Left lung (tissue), 14 donors: ENCODE measurements at regions of chr17 and their contacts with region 1.

Region 1: GRCh38 chr17:42720996-42721583 is 23.8 kb downstream of the EZH1 start:
- DNase-seq: peak in 2 of 4 donors; percentile 52 to 80
- ATAC-seq: peak; percentile 93
- H3K4me3 ChIP-seq: no peak overlapping the region
- H3K27ac ChIP-seq: no peak overlapping the region
- H3K4me1 ChIP-seq: peaks cover 0 to 8% of the 10 kb centered on the region in 2 donors
- H3K27me3 ChIP-seq: no peaks in the 10 kb centered on the region
- CTCF ChIP-seq: peak; percentile 58 to 60

Region 2: DNA sequence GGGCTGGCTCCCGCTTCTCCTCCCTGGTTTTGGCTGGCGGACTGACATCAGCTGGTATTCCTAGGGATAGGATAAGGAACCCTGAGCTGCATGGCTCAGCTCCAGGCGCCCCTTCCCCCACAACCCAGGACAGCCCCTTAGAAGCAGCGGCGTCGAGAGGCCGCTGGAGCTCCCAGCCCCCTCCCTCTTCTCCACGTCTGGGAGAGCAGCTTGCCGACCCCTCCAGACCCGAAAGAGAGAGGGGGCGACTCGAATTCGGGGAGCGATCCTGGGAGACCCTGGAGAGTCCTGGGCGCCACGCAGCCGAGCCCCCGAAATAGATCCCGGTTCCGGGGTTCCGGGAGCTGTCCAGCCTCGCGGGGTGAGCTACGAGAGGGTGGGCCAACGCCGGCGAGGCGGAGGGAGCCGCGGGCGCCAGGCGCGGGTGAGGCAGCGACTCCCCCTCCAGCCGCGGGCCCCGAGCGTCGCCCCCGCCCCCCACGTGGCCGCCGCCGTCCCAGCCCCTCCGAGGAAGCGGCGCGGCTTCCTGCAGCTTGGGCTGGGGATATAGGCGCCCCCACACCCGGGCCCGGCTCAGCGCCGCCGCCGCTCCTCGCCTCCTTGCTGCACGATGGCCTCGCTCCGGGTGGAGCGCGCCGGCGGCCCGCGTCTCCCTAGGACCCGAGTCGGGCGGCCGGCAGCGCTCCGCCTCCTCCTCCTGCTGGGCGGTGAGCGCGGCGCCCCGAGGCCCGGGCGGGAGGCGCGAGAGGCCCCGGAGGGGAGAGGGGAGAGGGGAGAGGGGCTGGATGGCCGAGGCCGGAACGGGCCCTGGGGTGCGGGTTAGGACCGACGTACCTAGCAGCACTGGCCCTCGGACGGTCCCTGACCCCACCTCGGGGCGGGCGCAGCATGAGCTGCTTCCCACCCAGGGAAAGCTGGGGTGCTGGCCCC is 39.8 kb after region 1 on chr17 and contains the start of gene RAMP2:
- intact Hi-C with region 1: loop called in 1 of 2 experiments (anchors 5 kb)
- DNase-seq: peak in 3 of 4 donors; percentile 56 to 83 (median 63)
- ATAC-seq: peak; percentile 58
- H3K4me3 ChIP-seq: peak within 1 kb of the TSS; percentile 40 to 49
- H3K27ac ChIP-seq: peak within 1 kb of the TSS; percentile 78 to 80
- H3K4me1 ChIP-seq: peaks cover 4 to 16% of the 10 kb centered on the region in 2 donors
- H3K27me3 ChIP-seq: peaks cover 20 to 57% of the 10 kb centered on the region in 2 donors
- CTCF ChIP-seq: no peak
- polyA plus RNA-seq, gene RAMP2: 153 to 213 (median 182) TPM

Region 3: GRCh38 chr17:42819944-42820535 is 99.0 kb after region 1 on chr17:
- intact Hi-C with region 1: loop called in 1 of 2 experiments (anchors 5 kb)
- DNase-seq: no peak
- ATAC-seq: no peak
- H3K4me3 ChIP-seq: no peak overlapping the region
- H3K27ac ChIP-seq: no peak overlapping the region
- H3K4me1 ChIP-seq: peaks cover 12 to 28% of the 10 kb centered on the region in 2 donors
- H3K27me3 ChIP-seq: no peaks in the 10 kb centered on the region
- CTCF ChIP-seq: peak; percentile 37 to 62